Esophagus muscularis mucosa (tissue), 4 donors: ENCODE measurements at regions of chr7 and their contacts with region 1.

Region 1: GRCh38 chr7:101217388-101218235 is at the starts of genes PLOD3 and ZNHIT1:
- DNase-seq: peak; percentile 99
- H3K4me3 ChIP-seq: peak within 1 kb of the TSS; percentile 71 to 93 (median 82)
- H3K27ac ChIP-seq: peak within 1 kb of the TSS; percentile 85 to 97 (median 94)
- H3K4me1 ChIP-seq: peaks cover 35 to 67% (median 46%) of the 10 kb centered on the region in 4 donors
- H3K27me3 ChIP-seq: no peaks in the 10 kb centered on the region
- CTCF ChIP-seq: peak in 1 of 3 experiments; percentile 7
- EP300 ChIP-seq: no peak
- POLR2A ChIP-seq: no peak
- total RNA-seq, gene PLOD3: 30.3 to 60.2 (median 50.1) TPM
- total RNA-seq, gene ZNHIT1: 60.6 to 86.7 (median 77.6) TPM

Region 2: GRCh38 chr7:101244375-101245146 is 26.9 kb after region 1 on chr7 and contains the start of gene FIS1:
- intact Hi-C with region 1: loop called (anchors 2 kb)
- DNase-seq: peak; percentile 97
- H3K4me3 ChIP-seq: peak within 1 kb of the TSS; percentile 59 to 90 (median 75)
- H3K27ac ChIP-seq: peak within 1 kb of the TSS; percentile 87 to 98 (median 97)
- H3K4me1 ChIP-seq: peaks cover 48 to 61% (median 58%) of the 10 kb centered on the region in 4 donors
- H3K27me3 ChIP-seq: no peaks in the 10 kb centered on the region
- CTCF ChIP-seq: peak; percentile 82 to 97 (median 89)
- EP300 ChIP-seq: no peak
- POLR2A ChIP-seq: peak; percentile 66
- total RNA-seq, gene FIS1: 216 to 310 (median 295) TPM